HEK293 (cell line): ENCODE measurements at regions of chr1 and their contacts with region 1.

Region 1: GRCh38 chr1:160006312-160006940 is 25.4 kb downstream of the PIGM start:
- H3K4me3 ChIP-seq: no peak overlapping the region
- H3K27ac ChIP-seq: no peak overlapping the region
- H3K4me1 ChIP-seq: no peaks in the 10 kb centered on the region
- CTCF ChIP-seq: peak; percentile 73

Region 2: DNA sequence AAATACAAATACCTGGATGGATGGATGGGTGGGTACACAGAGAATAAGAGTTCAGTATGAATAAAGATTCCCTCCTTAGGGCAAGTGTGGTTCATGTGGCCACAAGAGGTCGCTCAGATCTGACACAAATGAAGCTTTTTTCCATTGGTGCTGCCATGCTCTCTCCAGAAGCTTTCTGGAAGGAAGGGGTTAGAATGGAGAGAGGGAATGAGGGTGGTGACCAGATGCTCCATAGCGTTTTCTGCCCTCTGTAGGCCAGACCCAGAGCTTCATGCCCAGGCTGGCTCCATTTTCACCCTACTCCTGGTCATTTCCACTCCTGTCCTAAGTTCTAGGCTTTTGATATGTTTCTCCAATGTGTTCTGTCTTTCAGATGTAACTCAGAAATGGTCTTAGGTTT is 207.5 kb before region 1 on chr1:
- CTCF ChIA-PET with region 1: interaction called, 99 read pairs
- POLR2A ChIA-PET with region 1: no interaction called
- H3K4me3 ChIP-seq: no peak overlapping the region
- H3K27ac ChIP-seq: no peak overlapping the region
- H3K4me1 ChIP-seq: no peaks in the 10 kb centered on the region
- CTCF ChIP-seq: peak; percentile 46; the same call in 1 of the 2 replicates

Region 3: DNA sequence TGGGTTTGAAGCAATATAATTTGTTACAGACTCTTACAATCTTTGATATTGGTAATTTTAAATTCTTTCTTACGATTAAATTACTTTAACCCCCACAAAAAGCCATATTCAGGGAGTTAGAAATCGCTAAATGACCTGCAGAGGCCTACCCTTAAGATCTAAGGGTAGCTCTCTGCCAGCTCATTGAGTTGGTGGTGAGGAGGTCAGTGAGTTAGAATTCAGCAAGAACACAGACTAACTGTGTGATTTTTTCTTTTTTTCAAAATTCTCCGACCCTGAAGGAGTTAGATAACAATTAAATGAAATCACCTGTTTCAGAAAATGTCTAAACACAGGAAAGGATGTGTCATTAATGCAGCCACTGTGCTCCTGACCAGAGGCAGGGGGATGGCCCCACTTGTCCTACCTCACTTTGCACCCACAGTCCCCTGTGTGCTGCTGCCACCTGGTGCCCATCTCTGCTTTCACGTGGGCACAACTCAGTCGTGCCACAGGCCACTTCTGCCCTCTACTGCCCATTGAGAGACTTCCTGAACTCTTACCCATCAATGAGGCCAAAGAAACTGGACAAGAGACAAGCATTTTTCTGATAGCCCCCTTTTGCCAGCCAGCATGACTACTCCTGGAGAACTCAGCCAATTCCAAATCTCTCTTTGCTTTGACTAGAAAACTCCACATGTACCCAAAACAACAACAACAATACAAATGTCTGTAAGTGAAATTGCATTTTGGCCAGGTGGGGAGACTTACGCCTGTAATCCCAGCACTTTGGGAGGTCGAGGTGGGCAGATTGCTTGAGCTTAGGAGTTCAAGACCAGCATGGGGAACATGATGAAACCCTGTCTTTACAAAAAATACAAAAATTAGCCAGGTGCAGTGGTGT is 114.9 kb before region 1 on chr1:
- CTCF ChIA-PET with region 1: interaction called, 176 read pairs
- POLR2A ChIA-PET with region 1: interaction called, 4 read pairs
- H3K4me3 ChIP-seq: no peak overlapping the region
- H3K27ac ChIP-seq: no peak overlapping the region
- H3K4me1 ChIP-seq: no peaks in the 10 kb centered on the region
- CTCF ChIP-seq: peak; percentile 99

Region 4: DNA sequence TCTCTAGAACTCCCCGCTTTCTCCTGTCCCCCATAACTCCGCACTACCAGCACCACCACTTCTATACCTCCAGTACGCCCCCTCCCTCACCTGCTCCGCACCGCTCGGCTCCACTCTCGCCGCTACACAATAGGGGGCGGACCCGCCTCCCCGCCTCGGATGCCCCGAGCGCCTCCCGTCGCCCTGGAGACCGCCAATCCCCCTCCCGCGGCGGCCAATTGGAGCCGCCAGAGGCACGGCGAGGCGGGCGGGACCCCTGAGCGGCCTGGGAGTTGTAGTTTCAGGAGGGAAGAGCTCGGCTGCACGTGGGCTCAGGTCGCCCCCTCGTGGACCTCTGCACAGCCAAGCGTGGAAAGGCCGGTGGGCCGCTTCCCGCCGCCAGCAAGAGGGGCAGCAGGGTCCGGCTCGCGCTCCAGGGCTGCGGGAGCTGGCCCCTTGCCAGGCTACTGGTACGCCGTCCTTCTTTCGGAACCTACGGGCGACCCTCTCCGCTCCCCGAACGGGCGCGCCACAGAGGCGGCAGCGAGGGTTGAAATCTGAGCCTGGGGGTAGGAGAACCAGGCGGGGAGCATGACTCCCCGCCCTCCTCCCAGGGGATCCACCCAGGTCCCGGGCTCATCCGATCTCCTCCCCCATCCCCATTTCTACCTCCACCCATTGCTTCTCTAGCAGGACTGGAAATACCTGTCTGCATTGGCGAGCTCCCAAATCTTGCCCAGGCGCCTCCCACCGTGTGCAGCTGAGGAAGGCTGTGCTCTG is 60.8 kb before region 1 on chr1 and contains the start of gene IGSF9:
- CTCF ChIA-PET with region 1: interaction called, 353 read pairs
- POLR2A ChIA-PET with region 1: interaction called, 3 read pairs
- H3K4me3 ChIP-seq: peak within 1 kb of the TSS; percentile 45
- H3K27ac ChIP-seq: no peak within 1 kb of the TSS; the same call in 1 of the 2 replicates
- H3K4me1 ChIP-seq: no peaks in the 10 kb centered on the region
- CTCF ChIP-seq: peak; percentile 99

Region 5: DNA sequence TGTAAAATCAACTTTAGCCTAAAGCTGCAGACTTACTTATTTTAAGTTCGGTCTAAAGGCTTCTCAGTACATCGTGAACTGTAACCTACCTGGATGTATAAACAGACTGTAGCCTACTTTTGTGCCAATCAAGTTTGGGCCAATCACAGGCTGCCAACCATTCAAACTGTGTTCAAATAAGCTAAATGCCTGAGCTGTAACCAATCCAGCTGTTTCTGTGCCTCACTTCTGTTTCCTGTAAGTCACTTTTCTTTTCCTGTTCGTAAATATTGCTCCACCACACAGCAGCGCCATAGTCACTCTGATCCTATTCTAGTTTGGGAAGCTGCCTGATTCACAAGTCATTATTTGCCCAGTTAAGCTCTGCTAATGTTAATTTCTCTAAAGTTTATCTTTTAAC is 14.9 kb before region 1 on chr1:
- CTCF ChIA-PET with region 1: interaction called, 40 read pairs
- POLR2A ChIA-PET with region 1: no interaction called
- H3K4me3 ChIP-seq: no peak overlapping the region
- H3K27ac ChIP-seq: no peak overlapping the region
- H3K4me1 ChIP-seq: no peaks in the 10 kb centered on the region
- CTCF ChIP-seq: no peak

Region 6: GRCh38 chr1:160046494-160047110 is 40.2 kb after region 1 on chr1:
- CTCF ChIA-PET with region 1: interaction called, 10 read pairs
- POLR2A ChIA-PET with region 1: no interaction called
- H3K4me3 ChIP-seq: no peak overlapping the region
- H3K27ac ChIP-seq: no peak overlapping the region
- H3K4me1 ChIP-seq: no peaks in the 10 kb centered on the region
- CTCF ChIP-seq: peak; percentile 59

Region 7: DNA sequence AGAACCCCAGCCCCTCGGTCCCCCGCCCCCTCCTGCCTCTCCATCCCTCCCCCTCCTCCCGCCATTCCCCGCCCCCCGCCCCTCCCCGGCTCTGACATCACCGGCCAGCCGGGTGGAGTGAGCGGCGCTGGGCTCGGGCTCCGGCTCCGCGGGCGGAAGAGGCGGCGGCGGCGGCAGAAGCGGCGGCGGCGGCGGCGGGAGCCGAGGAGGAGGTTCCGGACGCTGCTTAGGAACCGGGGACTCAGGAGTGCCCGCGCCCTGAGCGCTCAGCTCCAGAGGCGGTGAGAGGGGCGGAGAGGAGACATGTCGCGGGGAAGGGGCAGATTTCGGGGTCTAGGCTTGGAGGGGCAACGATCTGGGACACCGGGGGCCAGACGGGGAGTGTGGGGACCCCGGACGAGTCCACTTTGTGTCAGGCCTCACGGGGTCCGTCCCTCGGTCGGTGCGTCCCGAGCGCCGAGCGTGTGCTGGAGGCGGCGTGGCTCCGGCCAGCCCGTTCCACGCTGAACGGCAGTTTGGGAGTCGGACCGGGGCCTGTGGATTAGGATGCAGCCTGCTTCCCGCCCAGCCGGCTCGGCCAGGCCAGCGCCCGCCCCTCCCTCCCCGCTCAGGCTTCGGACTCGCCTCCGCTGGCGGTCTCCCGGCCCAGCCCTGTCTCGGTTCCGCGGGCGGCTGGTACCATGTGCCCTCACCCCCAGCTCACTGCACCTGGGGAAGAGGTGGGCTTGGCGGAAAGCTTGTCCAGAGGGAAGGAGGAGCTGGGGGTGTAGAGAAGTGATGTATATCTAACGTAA is 199.0 kb after region 1 on chr1 and contains the start of gene PEA15:
- CTCF ChIA-PET with region 1: no interaction called
- POLR2A ChIA-PET with region 1: no interaction called
- H3K4me3 ChIP-seq: peak within 1 kb of the TSS; percentile 70
- H3K27ac ChIP-seq: peak within 1 kb of the TSS; percentile 82
- H3K4me1 ChIP-seq: 0 out of 2 replicates have a peak, but pooled peaks cover 2% of the 10 kb centered on the region
- CTCF ChIP-seq: 0 out of 2 replicates have a peak, but pooled peaks have one; percentile 16

Region 8: DNA sequence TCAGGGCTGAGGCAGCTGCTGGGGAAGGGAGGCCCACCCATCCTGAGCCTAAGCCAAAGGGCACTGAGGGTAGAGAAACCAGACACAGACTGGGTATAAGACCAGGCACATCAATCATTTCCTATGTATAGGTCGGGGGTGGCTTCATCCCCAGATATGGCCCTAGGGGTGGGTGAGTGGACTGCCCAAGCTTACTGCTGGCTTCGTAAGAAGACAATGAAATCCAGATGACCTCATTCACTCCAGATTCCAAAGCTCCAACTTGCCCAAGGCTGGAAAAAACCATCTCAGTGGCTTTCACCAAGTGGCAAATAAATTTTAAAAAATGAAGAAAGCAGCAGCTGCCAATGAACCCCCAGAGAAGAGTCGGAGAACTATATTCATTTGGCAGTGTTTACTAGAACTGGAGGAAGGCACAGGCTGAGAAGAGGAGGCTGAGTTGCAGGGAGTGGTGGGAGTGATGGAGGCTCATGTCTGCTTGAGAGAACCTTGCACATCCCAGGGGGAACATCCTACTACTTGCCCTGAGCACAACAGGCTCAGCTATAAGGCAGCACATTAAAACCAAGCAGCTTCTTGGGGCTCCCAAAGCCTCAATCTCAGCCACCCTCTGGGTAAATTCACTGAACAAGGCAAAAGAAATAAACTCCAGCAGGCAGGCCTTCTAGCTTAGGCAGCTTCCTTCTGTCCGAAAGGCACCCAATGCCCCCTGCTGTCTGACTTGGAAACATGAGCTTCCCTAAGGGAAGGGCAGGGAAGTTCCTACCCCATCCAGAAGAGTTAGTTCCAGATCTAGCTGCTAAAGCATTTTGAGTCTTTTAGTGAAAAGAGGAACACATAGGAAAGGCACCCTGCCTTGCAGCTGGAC is 212.9 kb after region 1 on chr1:
- CTCF ChIA-PET with region 1: no interaction called
- POLR2A ChIA-PET with region 1: no interaction called
- H3K4me3 ChIP-seq: no peak overlapping the region
- H3K27ac ChIP-seq: no peak overlapping the region; the same call in 1 of the 2 replicates
- H3K4me1 ChIP-seq: no peaks in the 10 kb centered on the region
- CTCF ChIP-seq: peak; percentile 69; the same call in 1 of the 2 replicates